PC-3 (cell line): ENCODE measurements at regions of chr15 and their contacts with region 1.

Region 1: DNA sequence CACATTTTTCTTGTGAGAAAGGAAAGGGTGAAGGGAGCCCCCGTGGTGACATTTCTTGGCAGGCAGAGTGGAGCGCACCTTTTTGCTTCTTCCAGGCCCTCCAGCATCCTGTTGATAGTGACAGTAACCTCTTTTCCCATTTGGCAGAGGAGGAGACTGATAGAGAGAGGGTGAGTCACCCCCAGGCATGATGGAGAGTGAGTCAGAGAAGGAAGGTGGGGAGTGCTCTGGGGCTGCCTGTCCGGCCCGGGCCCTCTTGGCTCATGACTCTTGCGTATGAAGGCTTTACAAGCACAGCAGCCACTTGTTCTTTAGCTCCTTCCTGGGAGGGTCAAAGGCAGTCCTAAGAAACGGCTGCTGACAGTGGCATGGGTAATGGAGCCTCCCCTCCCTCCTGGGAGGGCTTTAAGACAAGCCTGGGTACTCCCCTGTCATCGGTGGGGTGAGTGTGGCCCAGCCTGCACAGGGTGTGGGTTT is 16.0 kb downstream of the ANKRD63 start:
- DNase-seq: peak; percentile 98
- ATAC-seq: peak; percentile 98
- H3K4me3 ChIP-seq: peak overlapping the region; percentile 10; the same call in 1 of the 2 replicates
- H3K27ac ChIP-seq: peak overlapping the region; percentile 80
- H3K4me1 ChIP-seq: peaks cover 21% of the 10 kb centered on the region
- H3K27me3 ChIP-seq: no peaks in the 10 kb centered on the region
- CTCF ChIP-seq: no peak

Region 2: DNA sequence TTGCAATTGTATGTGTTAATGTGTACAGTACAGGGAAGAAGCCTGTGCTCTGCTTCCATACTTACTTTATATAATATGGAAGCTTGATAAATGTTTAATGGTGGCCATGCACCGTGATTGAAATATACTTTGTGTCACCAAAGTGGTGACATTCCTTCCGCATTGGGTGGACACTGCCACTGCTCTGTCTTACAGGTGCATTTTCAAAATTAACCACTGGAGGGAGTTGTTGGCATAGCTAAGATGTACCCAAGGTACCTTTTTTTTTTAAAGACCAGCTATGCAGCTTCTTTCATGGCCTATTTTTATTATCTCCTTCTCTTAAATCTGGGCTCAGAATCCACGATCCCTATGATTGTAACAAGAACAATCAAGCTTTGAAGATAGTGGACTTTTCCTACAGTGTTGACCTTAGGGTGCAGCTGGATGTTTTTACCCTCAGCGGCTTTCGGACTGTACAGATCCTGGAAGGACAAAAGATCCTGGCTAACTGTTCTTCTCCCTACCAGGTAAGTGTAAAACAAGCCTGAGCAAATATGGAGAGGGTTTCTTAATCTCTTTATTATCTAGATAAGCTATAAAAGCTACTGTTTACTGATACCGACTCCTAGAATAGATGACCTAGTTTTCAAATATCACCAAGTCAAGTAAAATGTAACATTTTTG is 49.6 kb before region 1 on chr15:
- CTCF ChIA-PET with region 1: interaction called, 86 read pairs
- POLR2A ChIA-PET with region 1: no interaction called
- intact Hi-C with region 1: loop called (anchors 2 kb)
- DNase-seq: peak; percentile 92
- ATAC-seq: peak; percentile 85
- H3K4me3 ChIP-seq: no peak overlapping the region
- H3K27ac ChIP-seq: no peak overlapping the region
- H3K4me1 ChIP-seq: no peaks in the 10 kb centered on the region
- H3K27me3 ChIP-seq: no peaks in the 10 kb centered on the region
- CTCF ChIP-seq: peak; percentile 94

Region 3: DNA sequence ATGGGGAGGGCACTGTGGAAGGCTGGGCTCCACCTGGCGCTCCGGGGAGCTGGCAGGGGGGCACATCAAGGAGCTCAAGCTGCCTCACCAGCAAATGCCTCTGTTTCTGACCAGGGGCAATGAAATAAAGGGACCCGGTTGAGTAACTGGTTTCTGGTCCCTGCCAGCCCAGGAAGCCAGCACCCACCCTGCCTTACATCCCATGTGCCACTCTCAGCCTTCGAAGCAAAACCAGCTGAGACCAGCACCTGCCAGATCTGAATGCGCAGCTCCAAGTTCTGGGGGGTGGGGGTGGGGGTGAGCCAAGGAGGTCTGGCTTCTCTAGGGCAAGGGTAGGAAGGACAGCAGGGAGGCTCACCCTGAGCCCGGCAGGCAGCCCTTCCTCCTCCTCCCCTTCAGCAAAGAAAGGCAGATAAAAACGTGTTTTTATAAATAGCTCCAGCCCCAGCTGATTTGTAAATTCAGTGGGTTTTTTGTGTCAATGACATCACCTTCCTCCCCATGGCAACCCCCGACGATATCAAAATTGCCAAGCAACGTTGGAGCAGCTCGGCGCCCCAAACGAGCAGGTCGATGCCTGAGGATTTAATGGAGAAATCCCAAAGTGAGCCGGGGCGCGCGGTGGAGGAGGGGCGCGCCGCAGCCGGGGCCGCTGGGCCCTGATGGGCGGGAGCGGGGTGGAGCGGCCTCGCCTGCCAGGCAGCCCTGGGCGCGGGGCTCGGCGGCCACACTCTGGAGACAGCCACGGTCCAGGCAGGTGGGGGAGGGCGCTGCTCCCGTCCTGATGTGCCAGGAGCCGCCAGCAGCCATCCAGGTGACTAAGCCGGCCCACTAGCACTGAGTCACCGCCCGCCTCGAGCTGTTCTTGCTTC is 28.1 kb before region 1 on chr15 and contains the start of gene PAK6:
- CTCF ChIA-PET with region 1: interaction called, 10 read pairs
- POLR2A ChIA-PET with region 1: no interaction called
- intact Hi-C with region 1: loop called (anchors 5 kb)
- DNase-seq: peak; percentile 93
- ATAC-seq: peak; percentile 91
- H3K4me3 ChIP-seq: peak within 1 kb of the TSS; percentile 67
- H3K27ac ChIP-seq: peak within 1 kb of the TSS; percentile 34
- H3K4me1 ChIP-seq: peaks cover 32% of the 10 kb centered on the region
- H3K27me3 ChIP-seq: no peaks in the 10 kb centered on the region
- CTCF ChIP-seq: no peak
- total RNA-seq, gene PAK6: 30.4 TPM in 2 replicates

Region 4: DNA sequence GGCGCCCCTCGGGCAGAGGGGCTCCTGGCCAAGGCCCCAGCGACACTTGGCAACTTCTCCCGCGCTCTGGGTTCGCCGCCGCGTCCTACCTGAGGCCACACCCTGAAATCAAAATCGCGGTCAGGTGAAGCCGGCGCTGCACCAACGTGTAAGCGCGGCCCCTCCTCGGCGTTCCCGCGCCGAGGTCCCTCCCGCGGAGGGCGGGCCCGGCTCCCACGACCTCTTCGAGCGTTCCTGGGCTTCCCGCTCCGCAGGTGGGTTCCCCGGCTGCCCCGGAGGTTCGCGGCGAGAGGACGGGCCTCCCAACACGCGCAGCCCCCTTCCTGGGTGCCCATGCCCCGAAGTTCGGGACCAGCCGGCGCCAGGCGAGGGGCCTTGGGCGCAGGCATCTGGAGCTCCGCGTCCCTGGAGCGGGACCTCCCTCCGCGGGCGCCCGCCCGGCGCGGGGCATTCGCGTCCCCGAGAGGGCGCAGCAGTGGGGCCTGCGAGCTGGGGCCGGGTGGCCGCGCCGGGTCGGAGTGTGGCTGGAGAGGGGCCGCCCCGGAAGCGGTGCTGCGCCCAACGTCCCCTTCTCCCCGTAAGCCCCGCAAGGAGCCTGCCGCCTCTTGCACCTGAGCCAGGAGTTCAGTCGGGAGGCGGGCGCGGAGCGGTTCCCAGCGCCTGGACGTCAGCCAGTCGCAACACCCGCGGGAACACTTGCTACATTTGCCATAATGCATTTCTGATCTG is 14.3 kb before region 1 on chr15:
- CTCF ChIA-PET with region 1: no interaction called
- POLR2A ChIA-PET with region 1: interaction called, 3 read pairs
- intact Hi-C with region 1: loop called (anchors 2 kb)
- DNase-seq: peak; percentile 72
- ATAC-seq: peak; percentile 26
- H3K4me3 ChIP-seq: peak overlapping the region; percentile 87
- H3K27ac ChIP-seq: no peak overlapping the region
- H3K4me1 ChIP-seq: peaks cover 36% of the 10 kb centered on the region
- H3K27me3 ChIP-seq: no peaks in the 10 kb centered on the region
- CTCF ChIP-seq: 0 out of 2 replicates have a peak, but pooled peaks have one; percentile 21